Transverse colon (tissue), 4 donors: ENCODE measurements at regions of chr19 and their contacts with region 1.

Region 1: GRCh38 chr19:6876748-6877147 is 10.6 kb upstream of the ADGRE1 start:
- DNase-seq: no peak
- H3K4me3 ChIP-seq: no peak overlapping the region
- H3K27ac ChIP-seq: no peak overlapping the region
- H3K4me1 ChIP-seq: peaks cover 0 to 5% (median 2%) of the 10 kb centered on the region in 4 donors
- H3K27me3 ChIP-seq: no peaks in the 10 kb centered on the region
- CTCF ChIP-seq: no peak
- EP300 ChIP-seq: no peak
- POLR2A ChIP-seq: no peak

Region 2: DNA sequence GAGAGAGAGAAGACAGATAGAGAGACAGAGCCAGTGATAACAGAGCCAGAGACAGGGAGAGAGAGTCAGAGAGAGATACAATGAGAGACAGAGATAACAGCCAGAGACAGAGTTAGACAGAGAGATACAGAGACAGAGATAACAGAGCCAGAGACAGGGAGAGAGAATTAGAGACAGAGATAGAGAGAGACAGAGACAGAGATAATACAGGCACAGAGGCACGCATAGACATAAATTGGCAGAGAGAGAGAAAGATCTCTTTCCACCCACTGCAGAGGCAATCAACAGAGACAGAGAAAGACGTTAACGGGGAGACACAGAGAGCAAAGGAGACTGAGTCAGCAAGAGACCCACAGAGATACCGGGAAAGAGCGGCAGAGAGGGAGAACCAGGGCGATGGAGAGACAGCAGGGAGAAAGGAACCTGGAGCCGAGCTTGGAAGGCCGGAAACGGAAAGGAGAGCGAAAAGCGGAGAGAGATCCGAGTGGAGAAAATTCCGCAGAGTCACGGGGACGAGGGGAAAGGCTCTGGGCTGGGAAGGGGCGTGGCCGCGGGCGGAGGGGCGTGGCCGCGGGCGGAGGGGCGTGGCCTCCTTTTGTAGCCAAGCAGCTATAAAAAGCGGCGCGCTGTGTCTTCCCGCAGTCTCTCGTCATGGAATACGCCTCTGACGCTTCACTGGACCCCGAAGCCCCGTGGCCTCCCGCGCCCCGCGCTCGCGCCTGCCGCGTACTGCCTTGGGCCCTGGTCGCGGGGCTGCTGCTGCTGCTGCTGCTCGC is 346.2 kb before region 1 on chr19 and contains the start of gene TNFSF9:
- in situ Hi-C with region 1: no loop called
- intact Hi-C with region 1: loop called (anchors 10 kb)
- DNase-seq: peak; percentile 94
- H3K4me3 ChIP-seq: peak within 1 kb of the TSS; percentile 15 to 64 (median 50)
- H3K27ac ChIP-seq: peak within 1 kb of the TSS; percentile 52 to 74 (median 65)
- H3K4me1 ChIP-seq: peaks cover 10 to 42% (median 23%) of the 10 kb centered on the region in 4 donors
- H3K27me3 ChIP-seq: peaks cover 21% of the 10 kb centered on the region
- CTCF ChIP-seq: no peak
- EP300 ChIP-seq: no peak
- POLR2A ChIP-seq: peak; percentile 68
- total RNA-seq, gene TNFSF9: 0.95 to 2.7 TPM in 2 of 4 donors, not detected in the others

Region 3: GRCh38 chr19:6626764-6627163 is 250.0 kb before region 1 on chr19:
- in situ Hi-C with region 1: loop called in 3 of 4 experiments (anchors 10 to 25 kb)
- intact Hi-C with region 1: no loop called
- DNase-seq: no peak
- H3K4me3 ChIP-seq: no peak overlapping the region
- H3K27ac ChIP-seq: no peak overlapping the region
- H3K4me1 ChIP-seq: no peaks in the 10 kb centered on the region
- H3K27me3 ChIP-seq: peaks cover 5% of the 10 kb centered on the region
- CTCF ChIP-seq: no peak
- EP300 ChIP-seq: no peak
- POLR2A ChIP-seq: no peak

Region 4: DNA sequence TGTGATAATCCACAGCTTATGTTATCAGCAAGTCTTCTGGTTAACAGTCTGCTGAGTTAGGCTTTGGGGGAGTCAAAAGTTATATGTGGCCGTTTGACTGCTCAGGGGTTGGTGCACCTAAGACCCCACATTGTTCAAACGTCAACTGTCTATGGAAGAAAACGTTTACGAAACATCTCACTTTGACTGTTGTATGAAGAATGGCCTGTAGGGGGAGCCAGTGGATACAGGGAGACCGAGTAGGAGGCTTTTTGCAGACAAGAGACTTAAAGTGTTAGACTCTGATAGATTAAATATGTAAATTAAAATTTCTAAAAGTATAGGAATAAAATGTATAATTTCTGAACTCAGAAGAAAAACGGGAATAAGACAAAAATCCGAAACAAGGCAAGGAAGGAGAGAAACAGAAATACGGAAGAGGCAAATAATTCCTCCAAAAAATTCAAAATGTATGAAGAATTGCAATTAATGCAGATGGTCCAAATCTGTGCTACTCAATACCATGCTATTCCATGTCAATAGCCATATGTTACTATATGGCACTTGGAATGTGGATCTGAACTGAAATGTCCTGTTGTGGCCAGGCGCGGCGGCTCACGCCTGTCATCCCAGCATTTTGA is 244.6 kb before region 1 on chr19:
- in situ Hi-C with region 1: loop called in 3 of 4 experiments (anchors 10 to 25 kb)
- intact Hi-C with region 1: no loop called
- DNase-seq: peak; percentile 77
- H3K4me3 ChIP-seq: no peak overlapping the region
- H3K27ac ChIP-seq: no peak overlapping the region
- H3K4me1 ChIP-seq: no peaks in the 10 kb centered on the region
- H3K27me3 ChIP-seq: peaks cover 5% of the 10 kb centered on the region
- CTCF ChIP-seq: peak; percentile 78 to 87 (median 84)
- EP300 ChIP-seq: no peak
- POLR2A ChIP-seq: no peak